PC-9 (cell line): ENCODE measurements at regions of chrX and their contacts with region 1.

Region 1: DNA sequence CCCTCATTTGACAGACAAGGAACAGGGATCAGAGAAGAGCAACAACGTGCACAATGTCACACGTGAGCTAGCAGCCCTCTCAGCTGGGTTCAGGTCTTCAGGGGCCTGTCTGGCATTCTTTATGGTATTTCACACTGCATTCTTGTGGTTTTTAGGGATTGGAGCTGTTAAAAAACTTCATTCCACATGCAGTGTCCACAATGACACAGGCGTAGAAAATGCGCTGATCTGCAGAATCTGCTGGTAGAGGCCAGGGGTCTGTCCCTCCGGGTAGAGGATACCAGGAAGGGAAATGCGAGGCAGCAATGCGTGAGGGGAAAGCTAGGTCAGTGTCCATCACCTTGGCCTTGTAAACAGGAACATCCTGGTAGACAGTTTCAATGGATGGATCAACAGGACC is 36.6 kb downstream of the MAP7D3 start:
- DNase-seq: peak; percentile 82 to 90
- H3K4me3 ChIP-seq: no peak overlapping the region
- H3K27ac ChIP-seq: 0 out of 2 replicates have a peak overlapping the region, but pooled peaks have one; percentile 1
- H3K4me1 ChIP-seq: peaks cover 22% of the 10 kb centered on the region
- H3K27me3 ChIP-seq: no peaks in the 10 kb centered on the region
- CTCF ChIP-seq: no peak

Region 2: DNA sequence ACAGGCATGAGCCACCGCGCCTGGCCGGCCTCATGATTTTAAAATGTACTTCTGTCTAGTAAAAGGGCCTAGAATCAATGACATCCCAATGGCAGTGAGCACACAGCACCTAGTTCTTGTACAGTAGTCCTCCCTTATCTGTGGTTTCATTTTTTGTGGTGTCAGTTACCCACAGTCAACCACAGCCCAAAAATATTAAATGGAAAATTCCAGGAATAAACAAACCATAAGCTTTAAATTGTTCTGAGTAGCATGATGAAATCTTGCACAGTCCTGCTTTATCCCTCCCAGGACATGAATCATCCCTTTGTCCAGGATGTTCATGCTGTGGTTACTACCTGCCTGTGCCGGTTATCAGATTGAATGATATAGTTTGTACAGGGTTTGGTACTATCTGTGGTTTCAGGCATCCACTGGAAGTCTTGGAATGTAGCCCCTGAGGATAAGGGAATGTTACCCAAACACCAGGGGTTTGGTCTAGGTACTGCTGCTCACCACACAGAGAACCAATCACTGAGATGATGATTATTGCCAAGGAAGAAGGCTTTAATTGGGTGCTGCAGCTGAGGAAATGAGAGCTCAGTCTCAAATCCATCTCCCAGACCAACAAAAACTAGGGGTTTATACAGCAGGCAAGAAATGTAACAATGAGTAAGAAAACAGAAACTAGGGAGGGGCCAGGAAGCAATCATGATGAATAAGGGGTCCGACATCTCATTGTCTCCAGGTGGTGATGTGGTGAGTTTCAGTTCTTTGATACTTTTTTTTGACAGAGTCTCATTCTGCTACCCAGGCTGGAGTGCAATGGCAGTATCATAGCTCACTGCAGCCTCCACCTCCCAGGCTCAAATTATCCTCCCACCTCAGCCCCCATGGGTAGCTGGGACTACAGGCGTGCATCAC is 83.4 kb before region 1 on chrX:
- CTCF ChIA-PET with region 1: no interaction called
- POLR2A ChIA-PET with region 1: no interaction called
- intact Hi-C with region 1: loop called (anchors 1 kb)
- DNase-seq: peak; percentile 61 to 99
- H3K4me3 ChIP-seq: no peak overlapping the region
- H3K27ac ChIP-seq: peak overlapping the region; percentile 88
- H3K4me1 ChIP-seq: peaks cover 35% of the 10 kb centered on the region
- H3K27me3 ChIP-seq: no peaks in the 10 kb centered on the region
- CTCF ChIP-seq: no peak

Region 3: DNA sequence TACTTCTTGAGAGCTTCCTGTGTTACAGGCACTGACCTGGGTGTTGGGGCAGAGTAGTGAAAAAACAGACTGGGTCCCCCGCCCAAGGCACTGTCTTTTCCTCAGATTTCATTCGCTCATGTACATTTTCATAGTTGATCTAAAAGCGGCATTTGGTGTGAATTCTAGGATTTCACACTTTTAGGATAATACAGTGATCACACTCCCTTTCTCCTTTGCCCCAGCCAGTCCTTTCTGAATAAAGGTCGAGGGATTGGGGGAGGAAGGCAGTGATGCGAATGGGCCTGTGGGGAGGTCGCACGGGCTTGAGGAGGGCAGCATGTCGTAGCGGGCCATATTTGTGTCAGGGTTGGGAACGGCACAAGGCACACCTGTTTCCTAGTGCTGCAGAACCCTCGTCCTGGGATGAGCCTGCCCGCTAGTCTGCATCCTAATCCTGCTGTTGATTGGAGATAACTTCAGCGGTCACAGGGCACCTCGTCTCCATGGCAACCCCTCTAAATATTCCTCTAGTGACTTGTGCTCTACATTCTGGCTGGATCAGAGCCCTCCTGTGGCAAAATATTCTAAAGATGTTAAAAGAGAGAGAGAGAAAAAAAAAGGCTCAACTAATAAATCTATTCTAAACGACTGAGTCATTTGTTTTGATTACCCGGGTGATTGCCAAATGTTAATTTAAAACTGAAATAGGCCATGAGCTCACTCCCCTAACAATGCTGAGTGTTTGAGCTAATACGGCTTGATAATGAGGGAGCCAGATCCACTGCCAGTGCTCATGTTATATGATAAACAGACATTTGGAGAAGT is 45.4 kb before region 1 on chrX:
- CTCF ChIA-PET with region 1: no interaction called
- POLR2A ChIA-PET with region 1: no interaction called
- intact Hi-C with region 1: loop called (anchors 5 kb)
- DNase-seq: peak; percentile 33 to 94
- H3K4me3 ChIP-seq: no peak overlapping the region
- H3K27ac ChIP-seq: no peak overlapping the region
- H3K4me1 ChIP-seq: peaks cover 42% of the 10 kb centered on the region
- H3K27me3 ChIP-seq: no peaks in the 10 kb centered on the region
- CTCF ChIP-seq: no peak

Region 4: GRCh38 chrX:136353519-136354095 is 139.1 kb after region 1 on chrX:
- CTCF ChIA-PET with region 1: no interaction called
- POLR2A ChIA-PET with region 1: no interaction called
- intact Hi-C with region 1: loop called (anchors 1 kb)
- DNase-seq: peak; percentile 61 to 99
- H3K4me3 ChIP-seq: no peak overlapping the region
- H3K27ac ChIP-seq: peak overlapping the region; percentile 95
- H3K4me1 ChIP-seq: peaks cover 38% of the 10 kb centered on the region
- H3K27me3 ChIP-seq: no peaks in the 10 kb centered on the region
- CTCF ChIP-seq: no peak

Region 5: GRCh38 chrX:137118136-137118535 is 903.6 kb after region 1 on chrX:
- CTCF ChIA-PET with region 1: no interaction called
- POLR2A ChIA-PET with region 1: no interaction called
- intact Hi-C with region 1: no loop called
- DNase-seq: peak in 1 of 2 experiments; percentile 53
- H3K4me3 ChIP-seq: no peak overlapping the region
- H3K27ac ChIP-seq: no peak overlapping the region
- H3K4me1 ChIP-seq: no peaks in the 10 kb centered on the region; the same call in 1 of the 2 replicates
- H3K27me3 ChIP-seq: no peaks in the 10 kb centered on the region
- CTCF ChIP-seq: no peak